Transverse colon (tissue), 4 donors: ENCODE measurements at regions of chr20 and their contacts with region 1.

Region 1: DNA sequence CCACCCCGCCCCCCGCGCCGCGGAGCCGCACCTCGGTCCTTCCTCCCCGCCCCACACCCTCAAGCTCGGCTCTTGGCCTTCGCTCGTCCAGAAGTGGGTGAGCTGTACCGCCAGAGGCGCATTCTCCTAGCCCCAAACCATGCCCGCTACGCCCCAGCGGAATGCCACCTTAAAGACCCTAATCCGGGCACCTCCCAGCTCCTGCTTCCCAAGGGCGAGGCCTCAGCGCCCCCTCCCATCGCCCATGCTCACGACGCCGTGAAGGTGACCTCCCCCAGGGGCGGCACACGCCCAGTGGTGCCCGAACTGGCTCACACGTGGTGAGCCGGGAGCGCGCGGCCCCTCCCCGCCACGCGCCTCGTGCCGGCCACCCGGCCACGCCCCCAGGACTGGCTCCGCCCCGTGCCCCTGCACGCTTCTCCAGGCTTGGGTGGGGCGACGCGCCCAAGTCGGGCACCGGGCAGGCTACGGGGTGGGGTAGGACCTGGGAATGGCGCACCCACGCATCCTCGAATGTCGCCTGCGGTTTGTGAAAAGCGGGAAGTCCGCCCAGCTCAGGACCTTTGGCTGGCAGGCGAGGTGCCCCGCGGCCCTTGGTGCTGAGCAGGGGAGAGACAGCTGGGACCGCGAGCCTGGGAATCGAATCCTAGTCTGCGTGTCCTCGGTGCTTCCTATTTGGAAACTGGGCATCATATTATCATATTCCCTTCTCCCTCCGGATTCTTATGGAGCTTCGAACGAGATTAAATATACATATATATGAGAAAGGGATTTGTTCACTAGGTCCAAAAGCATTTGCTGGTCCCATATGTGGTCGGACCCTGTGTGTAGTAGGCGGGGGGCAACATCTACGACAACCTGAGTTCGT is 941 bp upstream of the SOX12 start:
- DNase-seq: peak; percentile 96
- H3K4me3 ChIP-seq: peak overlapping the region; percentile 57 to 74 (median 68)
- H3K27ac ChIP-seq: peak overlapping the region; percentile 94 to 98 (median 96)
- H3K4me1 ChIP-seq: peaks cover 3 to 34% (median 24%) of the 10 kb centered on the region in 4 donors
- H3K27me3 ChIP-seq: no peaks in the 10 kb centered on the region
- CTCF ChIP-seq: peak; percentile 8 to 55 (median 31)
- EP300 ChIP-seq: no peak
- POLR2A ChIP-seq: no peak

Region 2: GRCh38 chr20:278607-279571 is 45.5 kb before region 1 on chr20:
- in situ Hi-C with region 1: no loop called
- intact Hi-C with region 1: loop called (anchors 10 kb)
- DNase-seq: no peak
- H3K4me3 ChIP-seq: no peak overlapping the region
- H3K27ac ChIP-seq: no peak overlapping the region
- H3K4me1 ChIP-seq: no peaks in the 10 kb centered on the region
- H3K27me3 ChIP-seq: no peaks in the 10 kb centered on the region
- CTCF ChIP-seq: no peak
- EP300 ChIP-seq: no peak
- POLR2A ChIP-seq: no peak